ENCODE measurements at regions of chr22 and their contacts with region 1.

Region 1: GRCh38 chr22:48574776-48575565 is 1252.7 kb downstream of the BRD1 start:
- DNase-seq: no peak
- H3K4me3 ChIP-seq: peak overlapping the region in 1 of 2 donors; percentile 33
- H3K27ac ChIP-seq: no peak overlapping the region
- H3K4me1 ChIP-seq: peaks cover 0 to 24% of the 10 kb centered on the region in 2 donors
- H3K27me3 ChIP-seq: no peaks in the 10 kb centered on the region
- CTCF ChIP-seq: peak; percentile 58 to 71 (median 66)

Region 2: DNA sequence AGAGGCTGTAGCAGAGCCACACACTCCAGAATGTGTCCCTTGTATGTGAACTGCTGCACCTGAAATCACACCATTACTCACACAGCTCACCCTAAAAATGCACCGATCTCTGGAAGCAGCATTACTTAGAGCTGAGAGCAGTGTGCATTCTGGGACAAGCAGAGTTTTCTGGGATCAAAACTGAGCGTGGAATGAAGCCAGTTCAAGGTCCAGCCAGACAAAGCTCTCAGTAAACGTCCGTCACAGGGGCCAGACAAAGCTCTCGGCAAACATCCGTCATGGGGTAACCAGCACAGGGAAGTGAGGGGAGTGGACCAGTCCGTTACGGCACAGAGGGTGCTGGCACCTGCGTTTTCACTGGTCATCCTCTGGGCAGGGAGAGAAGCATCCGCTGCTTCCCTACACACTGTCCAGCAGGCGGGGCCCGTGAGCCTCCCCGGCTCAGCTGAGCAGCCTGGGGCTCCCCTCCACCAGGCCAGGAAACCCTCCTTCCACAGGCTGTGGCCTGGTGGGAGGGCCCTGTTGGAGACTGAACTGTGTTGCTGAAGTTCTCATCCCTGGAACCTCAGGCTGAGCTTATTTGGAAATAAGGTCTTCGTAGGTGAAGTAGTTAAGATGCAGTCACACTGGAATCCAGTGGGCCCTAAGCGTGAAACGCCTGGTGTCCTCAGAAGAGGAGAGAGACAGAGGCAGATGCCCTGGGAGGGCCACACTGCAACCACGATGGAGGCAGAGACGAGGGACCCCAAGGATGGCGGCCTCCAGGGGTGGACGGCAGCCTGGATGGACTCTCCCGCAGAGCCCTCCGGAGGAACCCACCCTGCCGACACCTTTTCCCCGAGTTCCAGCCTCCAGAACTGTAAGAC is 368.8 kb after region 1 on chr22:
- intact Hi-C with region 1: loop called (anchors 10 kb)
- DNase-seq: peak in 1 of 2 donors; percentile 56
- H3K4me3 ChIP-seq: no peak overlapping the region
- H3K27ac ChIP-seq: no peak overlapping the region
- H3K4me1 ChIP-seq: no peaks in the 10 kb centered on the region
- H3K27me3 ChIP-seq: no peaks in the 10 kb centered on the region
- CTCF ChIP-seq: peak in 2 of 3 experiments; percentile 41 to 54

Region 3: DNA sequence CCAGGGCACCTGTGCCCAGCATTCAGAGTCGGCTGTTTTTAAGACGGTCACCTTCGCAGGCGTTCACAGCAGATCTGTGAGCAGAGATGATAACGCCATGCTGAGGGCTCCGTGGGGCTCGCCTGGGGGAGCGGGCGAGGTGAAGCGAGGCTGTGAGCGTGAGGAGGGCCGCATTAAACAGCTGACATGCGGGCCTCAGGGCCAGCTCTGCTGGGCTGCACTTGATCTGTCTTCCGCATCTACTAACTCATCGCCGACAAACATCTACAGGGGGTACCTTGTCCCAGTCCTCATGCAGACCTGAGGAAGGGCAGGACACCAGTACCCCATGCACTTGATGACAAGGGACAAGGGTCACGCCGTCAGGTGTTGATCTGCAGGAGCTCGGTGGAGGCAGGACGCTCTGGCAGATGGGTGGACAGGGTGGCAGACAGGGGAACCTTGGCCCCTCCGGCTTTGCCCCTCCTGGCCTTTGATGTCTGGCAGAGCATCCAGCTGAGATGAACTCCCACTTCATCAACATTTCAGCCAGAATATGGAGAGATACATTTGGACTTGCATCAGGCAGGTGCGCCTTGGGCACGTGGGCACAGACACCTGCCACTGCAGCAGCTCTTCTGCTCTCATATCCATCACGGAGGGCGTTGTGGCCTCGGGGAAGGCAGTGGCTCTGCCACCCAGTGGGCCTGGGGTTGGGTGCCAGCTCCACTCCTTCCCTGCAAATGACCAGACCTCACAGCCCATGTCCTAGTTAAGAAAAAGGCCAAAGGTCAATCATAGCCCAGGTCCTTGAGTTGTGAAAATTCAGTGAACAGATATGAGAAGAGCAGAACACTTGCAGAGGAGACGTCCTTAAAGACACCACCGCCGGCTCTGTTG is 429.8 kb after region 1 on chr22:
- intact Hi-C with region 1: no loop called
- DNase-seq: no peak
- H3K4me3 ChIP-seq: no peak overlapping the region
- H3K27ac ChIP-seq: no peak overlapping the region
- H3K4me1 ChIP-seq: peaks cover 0 to 8% of the 10 kb centered on the region in 2 donors
- H3K27me3 ChIP-seq: no peaks in the 10 kb centered on the region
- CTCF ChIP-seq: no peak

Region 4: GRCh38 chr22:49015993-49016908 is 441.3 kb after region 1 on chr22:
- intact Hi-C with region 1: loop called (anchors 5 kb)
- DNase-seq: peak in 1 of 2 donors; percentile 65
- H3K4me3 ChIP-seq: no peak overlapping the region
- H3K27ac ChIP-seq: peak overlapping the region; percentile 84 to 86
- H3K4me1 ChIP-seq: peaks cover 28 to 44% of the 10 kb centered on the region in 2 donors
- H3K27me3 ChIP-seq: no peaks in the 10 kb centered on the region
- CTCF ChIP-seq: no peak

Region 5: DNA sequence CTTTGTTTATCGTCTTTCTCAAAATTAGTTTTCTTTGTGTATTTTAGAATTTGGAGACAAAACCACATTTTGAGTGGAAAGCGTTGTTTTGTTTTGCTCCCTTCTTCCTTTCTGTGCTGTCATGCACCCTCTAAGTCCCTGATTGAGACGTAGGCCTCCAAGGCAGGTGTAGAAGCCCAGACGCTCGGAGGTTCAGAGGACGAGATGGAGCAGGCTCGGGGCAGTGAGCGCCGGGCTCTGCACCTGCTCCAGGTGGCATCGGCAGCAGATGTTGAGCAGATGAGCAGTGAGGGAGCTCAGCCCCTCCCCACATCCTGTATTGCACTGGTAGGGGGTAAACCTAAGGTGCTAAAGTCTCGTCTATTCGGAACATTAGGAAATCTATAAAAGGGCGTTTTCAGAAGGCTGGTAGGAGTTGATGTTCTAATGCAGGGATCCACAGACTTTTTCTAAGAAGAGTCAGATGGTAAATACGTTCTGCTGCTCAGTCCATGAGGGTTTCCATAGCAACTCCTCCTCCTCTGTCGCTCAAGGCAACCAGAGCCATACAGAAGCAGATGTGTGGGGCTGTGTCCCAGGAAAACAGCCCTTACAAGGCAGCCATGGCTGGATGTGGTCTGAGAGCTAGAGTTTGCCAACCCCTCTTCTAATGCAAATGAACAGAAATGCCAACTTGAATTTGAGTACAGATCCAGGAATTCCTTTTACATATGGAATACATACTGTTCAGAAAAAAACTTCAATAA is 528.5 kb after region 1 on chr22:
- intact Hi-C with region 1: loop called (anchors 5 kb)
- DNase-seq: no peak
- H3K4me3 ChIP-seq: no peak overlapping the region
- H3K27ac ChIP-seq: no peak overlapping the region
- H3K4me1 ChIP-seq: peaks cover 7 to 17% of the 10 kb centered on the region in 2 donors
- H3K27me3 ChIP-seq: no peaks in the 10 kb centered on the region
- CTCF ChIP-seq: no peak

Region 6: GRCh38 chr22:49305214-49305909 is 730.4 kb after region 1 on chr22:
- intact Hi-C with region 1: loop called (anchors 1 kb)
- DNase-seq: peak in 1 of 2 donors; percentile 73
- H3K4me3 ChIP-seq: peak overlapping the region in 1 of 2 donors; percentile 45
- H3K27ac ChIP-seq: no peak overlapping the region
- H3K4me1 ChIP-seq: no peaks in the 10 kb centered on the region
- H3K27me3 ChIP-seq: no peaks in the 10 kb centered on the region
- CTCF ChIP-seq: peak; percentile 83 to 97 (median 95)

Region 7: GRCh38 chr22:49827853-49828598 is 1253.1 kb after region 1 on chr22 and contains the start of gene BRD1:
- intact Hi-C with region 1: loop called (anchors 5 kb)
- DNase-seq: no peak
- H3K4me3 ChIP-seq: peak within 1 kb of the TSS; percentile 91 to 93
- H3K27ac ChIP-seq: peak within 1 kb of the TSS; percentile 82 to 86
- H3K4me1 ChIP-seq: peaks cover 9 to 23% of the 10 kb centered on the region in 2 donors
- H3K27me3 ChIP-seq: no peaks in the 10 kb centered on the region
- CTCF ChIP-seq: no peak
- total RNA-seq, gene BRD1: 32.5 TPM